Endothelial cell of umbilical vein (primary cell): ENCODE measurements at regions of chr12 and their contacts with region 1.

Region 1: GRCh38 chr12:94644141-94644979 is 6.0 kb downstream of the TMCC3 start:
- DNase-seq: peak; percentile 83
- H3K4me3 ChIP-seq: peak overlapping the region in 1 of 3 experiments; percentile 34
- H3K27ac ChIP-seq: peak overlapping the region; percentile 79
- H3K4me1 ChIP-seq: peaks cover 43% of the 10 kb centered on the region
- H3K27me3 ChIP-seq: no peaks in the 10 kb centered on the region
- CTCF ChIP-seq: no peak
- POLR2A ChIP-seq: no peak

Region 2: DNA sequence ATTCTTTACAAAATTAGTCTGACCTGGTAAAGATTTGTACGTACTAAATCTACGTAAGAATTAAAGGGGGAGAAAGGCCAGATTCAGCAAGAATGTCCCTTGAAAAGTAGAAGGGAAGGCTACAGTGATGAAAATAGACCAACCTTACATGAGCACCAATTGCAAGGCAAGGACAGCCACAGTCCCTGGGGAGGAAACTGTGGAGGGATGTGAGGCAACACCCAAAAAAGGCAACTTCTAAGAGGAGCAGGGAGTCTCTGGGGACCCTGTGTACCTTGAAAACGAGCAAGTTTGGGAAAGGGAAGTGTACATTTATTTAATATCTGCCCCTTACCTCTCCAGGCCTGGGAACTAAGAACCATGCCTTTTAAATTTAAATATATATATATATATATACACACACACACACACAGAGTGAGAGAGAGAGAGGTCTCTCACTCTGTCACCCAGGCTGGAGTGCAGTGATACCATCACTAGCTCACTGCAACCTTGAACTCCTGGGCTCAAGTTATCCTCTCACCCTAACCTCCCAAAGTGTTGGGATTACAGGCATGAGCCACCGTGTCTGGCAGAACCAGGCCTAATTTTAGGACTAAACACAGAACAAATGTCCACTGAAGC is 50.4 kb before region 1 on chr12:
- CTCF ChIA-PET with region 1: no interaction called
- POLR2A ChIA-PET with region 1: no interaction called
- dilution Hi-C with region 1: no loop called
- intact Hi-C with region 1: loop called (anchors 1 kb)
- DNase-seq: no peak
- H3K4me3 ChIP-seq: no peak overlapping the region
- H3K27ac ChIP-seq: peak overlapping the region; percentile 0
- H3K4me1 ChIP-seq: peaks cover 57% of the 10 kb centered on the region
- H3K27me3 ChIP-seq: no peaks in the 10 kb centered on the region
- CTCF ChIP-seq: no peak
- POLR2A ChIP-seq: no peak

Region 3: DNA sequence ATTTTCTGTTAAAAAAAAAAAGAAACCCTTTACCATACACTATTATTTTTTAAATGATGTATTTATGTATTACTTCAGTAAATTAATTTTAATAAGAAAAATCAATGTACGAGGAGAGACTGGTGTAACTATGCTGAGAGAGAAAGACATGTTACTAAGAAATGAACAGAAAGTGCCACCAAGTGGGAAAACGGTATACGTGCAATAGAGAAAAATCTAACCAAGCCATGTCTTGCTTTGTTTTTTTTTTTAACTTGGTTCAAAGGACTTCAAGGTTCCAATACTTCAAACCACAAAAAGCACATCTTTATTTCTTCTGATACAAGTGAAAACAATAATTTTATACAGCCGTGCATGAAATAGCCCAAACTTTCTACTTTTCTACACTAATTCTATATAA is 336.2 kb after region 1 on chr12:
- CTCF ChIA-PET with region 1: no interaction called
- POLR2A ChIA-PET with region 1: no interaction called
- dilution Hi-C with region 1: no loop called
- intact Hi-C with region 1: loop called (anchors 5 kb)
- DNase-seq: peak; percentile 34
- H3K4me3 ChIP-seq: no peak overlapping the region
- H3K27ac ChIP-seq: no peak overlapping the region
- H3K4me1 ChIP-seq: no peaks in the 10 kb centered on the region
- H3K27me3 ChIP-seq: no peaks in the 10 kb centered on the region
- CTCF ChIP-seq: no peak
- POLR2A ChIP-seq: no peak